PC-9 (cell line): ENCODE measurements at regions of chr14 and their contacts with region 1.

Region 1: GRCh38 chr14:73633116-73634010 is 11.4 kb upstream of the DNAL1 start:
- DNase-seq: peak; percentile 59 to 61
- H3K4me3 ChIP-seq: peak overlapping the region; percentile 58
- H3K27ac ChIP-seq: no peak overlapping the region
- H3K4me1 ChIP-seq: peaks cover 13% of the 10 kb centered on the region
- H3K27me3 ChIP-seq: no peaks in the 10 kb centered on the region
- CTCF ChIP-seq: peak; percentile 93

Region 2: GRCh38 chr14:73443758-73444157 is 189.6 kb before region 1 on chr14:
- CTCF ChIA-PET with region 1: interaction called, 10 read pairs
- POLR2A ChIA-PET with region 1: no interaction called
- intact Hi-C with region 1: no loop called
- DNase-seq: no peak
- H3K4me3 ChIP-seq: no peak overlapping the region
- H3K27ac ChIP-seq: no peak overlapping the region
- H3K4me1 ChIP-seq: no peaks in the 10 kb centered on the region
- H3K27me3 ChIP-seq: no peaks in the 10 kb centered on the region
- CTCF ChIP-seq: no peak

Region 3: DNA sequence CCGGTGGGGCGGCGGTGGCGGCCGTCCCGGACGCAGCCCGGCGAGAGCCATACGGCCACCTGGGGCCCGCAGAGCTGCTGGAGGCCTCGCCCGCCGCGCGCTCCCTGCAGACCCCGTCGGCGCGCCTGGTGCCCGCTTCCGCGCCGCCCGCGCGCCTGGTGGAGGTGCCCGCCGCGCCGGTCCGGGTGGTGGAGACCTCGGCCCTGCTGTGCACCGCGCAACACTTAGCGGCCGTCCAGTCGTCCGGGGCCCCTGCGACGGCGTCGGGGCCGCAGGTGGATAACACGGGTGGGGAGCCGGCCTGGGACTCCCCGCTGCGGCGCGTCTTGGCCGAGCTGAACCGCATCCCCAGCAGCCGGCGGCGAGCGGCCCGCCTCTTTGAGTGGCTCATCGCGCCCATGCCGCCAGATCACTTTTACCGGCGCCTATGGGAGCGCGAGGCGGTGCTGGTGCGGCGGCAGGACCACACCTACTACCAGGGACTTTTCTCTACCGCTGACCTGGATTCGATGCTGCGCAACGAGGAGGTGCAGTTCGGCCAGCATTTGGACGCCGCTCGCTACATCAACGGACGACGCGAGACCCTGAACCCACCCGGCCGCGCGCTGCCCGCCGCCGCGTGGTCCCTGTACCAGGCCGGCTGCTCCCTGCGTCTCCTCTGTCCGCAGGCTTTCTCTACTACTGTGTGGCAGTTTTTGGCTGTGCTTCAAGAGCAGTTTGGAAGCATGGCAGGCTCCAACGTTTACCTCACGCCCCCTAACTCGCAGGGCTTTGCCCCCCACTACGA is 141.9 kb before region 1 on chr14:
- CTCF ChIA-PET with region 1: no interaction called
- POLR2A ChIA-PET with region 1: interaction called, 10 read pairs
- intact Hi-C with region 1: no loop called
- DNase-seq: peak; percentile 75 to 79
- H3K4me3 ChIP-seq: peak overlapping the region; percentile 76
- H3K27ac ChIP-seq: peak overlapping the region; percentile 52; the same call in 1 of the 2 replicates
- H3K4me1 ChIP-seq: peaks cover 23% of the 10 kb centered on the region
- H3K27me3 ChIP-seq: no peaks in the 10 kb centered on the region
- CTCF ChIP-seq: no peak

Region 4: DNA sequence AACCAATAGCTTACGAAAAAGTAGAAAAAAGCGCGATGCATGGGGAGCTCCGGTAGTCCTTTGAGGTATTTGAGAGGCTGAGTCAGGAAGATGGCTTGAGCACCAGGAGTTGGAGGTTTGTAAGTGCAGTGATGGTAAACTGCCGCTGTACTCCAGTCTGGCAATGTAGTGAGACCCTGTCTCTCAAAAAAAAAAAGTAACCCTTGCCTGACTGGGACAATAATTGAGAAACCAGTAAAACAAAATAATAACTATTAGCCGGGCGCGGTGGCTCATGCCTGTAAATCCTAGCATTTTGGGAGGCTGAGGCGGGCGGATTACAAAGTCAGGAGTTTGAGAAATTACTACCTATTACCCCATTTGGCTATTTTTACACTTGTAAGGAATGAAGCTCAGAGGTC is 65.0 kb before region 1 on chr14:
- CTCF ChIA-PET with region 1: interaction called, 8 read pairs
- POLR2A ChIA-PET with region 1: no interaction called
- intact Hi-C with region 1: loop called (anchors 2 kb)
- DNase-seq: no peak
- H3K4me3 ChIP-seq: peak overlapping the region; percentile 65
- H3K27ac ChIP-seq: 0 out of 2 replicates have a peak overlapping the region, but pooled peaks have one; percentile 3
- H3K4me1 ChIP-seq: peaks cover 27% of the 10 kb centered on the region
- H3K27me3 ChIP-seq: no peaks in the 10 kb centered on the region
- CTCF ChIP-seq: no peak

Region 5: DNA sequence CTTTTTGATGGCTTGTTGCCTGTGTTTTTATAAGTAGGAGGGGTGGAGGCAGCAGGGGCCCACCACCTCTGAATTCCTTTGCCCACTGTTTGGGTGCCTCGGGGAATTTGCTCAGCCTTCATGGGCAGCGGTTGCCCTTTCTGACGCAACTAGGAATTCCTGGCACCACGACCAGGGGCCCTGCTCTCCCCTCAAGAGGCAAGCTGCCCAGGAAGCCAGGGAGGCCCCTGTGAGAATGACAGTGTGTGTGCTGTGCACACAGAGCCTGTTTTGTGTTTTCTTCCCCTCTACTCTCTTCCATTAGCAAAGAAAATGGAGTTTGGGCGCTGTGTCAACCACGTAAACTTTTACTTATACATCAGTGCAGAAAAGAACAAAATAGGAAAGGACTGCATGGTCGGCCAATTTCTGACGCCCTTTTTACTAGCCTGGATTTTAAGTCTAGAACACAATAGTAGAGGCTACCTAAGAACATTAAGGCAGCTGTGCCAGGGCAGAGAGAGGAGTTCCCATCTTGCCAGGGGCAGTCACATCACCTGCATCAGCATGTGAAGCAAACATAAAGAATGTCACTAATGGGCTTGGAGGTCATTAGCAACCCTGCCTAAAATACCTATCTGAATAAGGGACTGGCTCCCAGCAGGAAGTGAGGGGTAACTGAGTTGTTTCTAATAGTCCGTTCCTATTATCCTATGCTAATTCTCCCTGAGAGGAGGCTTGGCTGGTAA is 200.3 kb after region 1 on chr14:
- CTCF ChIA-PET with region 1: interaction called, 14 read pairs
- POLR2A ChIA-PET with region 1: no interaction called
- intact Hi-C with region 1: no loop called
- DNase-seq: peak; percentile 32 to 58
- H3K4me3 ChIP-seq: no peak overlapping the region
- H3K27ac ChIP-seq: peak overlapping the region; percentile 47
- H3K4me1 ChIP-seq: peaks cover 41% of the 10 kb centered on the region
- H3K27me3 ChIP-seq: no peaks in the 10 kb centered on the region
- CTCF ChIP-seq: no peak